Cardiac septum (tissue), 1 donor: ENCODE measurements at regions of chr2 and their contacts with region 1.

Region 1: DNA sequence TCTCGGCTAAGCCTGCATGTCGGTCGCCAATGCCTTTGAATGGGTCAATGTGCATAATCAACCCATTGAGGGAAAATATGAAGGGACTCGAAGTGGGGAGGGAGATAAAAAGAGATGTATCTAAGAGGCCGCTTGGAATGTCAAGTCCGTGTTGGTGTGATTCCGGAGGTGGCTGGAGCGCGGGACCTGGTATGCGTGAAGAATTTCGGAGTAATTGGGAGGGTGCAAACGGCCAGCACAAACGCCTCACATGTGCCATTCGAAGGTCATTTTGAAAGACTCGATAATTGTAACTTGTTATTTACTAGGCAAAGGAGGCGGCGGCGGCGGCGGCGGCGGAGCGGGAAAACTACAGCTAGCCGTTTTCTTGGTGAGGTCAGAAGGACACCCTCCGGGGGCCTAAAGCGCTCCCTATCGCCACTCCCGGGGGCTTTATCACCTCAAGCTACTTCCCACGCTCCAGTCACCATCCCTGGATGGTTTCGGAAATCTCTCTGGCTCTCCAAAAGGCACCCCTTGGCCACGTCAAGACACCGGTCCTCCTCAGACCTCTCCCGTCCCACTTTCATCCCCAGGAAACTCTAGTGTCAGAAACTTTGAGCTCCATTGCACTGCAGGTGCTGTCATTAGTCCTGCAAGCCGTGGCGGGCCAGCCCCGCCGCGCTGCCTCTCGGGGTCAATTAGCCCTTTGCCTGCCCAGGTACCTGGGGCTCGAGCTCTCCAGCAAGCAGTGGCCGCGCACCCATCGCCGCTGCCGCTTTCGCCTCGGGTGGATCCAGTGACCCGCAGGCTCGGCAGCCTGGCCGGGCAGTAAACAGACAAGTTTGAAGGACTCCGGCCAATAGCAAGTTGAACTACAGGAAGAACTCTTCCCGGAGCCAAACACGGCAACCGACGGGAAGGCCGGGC is 1.5 kb downstream of the ERBB4 start:
- DNase-seq: no peak

Region 2: DNA sequence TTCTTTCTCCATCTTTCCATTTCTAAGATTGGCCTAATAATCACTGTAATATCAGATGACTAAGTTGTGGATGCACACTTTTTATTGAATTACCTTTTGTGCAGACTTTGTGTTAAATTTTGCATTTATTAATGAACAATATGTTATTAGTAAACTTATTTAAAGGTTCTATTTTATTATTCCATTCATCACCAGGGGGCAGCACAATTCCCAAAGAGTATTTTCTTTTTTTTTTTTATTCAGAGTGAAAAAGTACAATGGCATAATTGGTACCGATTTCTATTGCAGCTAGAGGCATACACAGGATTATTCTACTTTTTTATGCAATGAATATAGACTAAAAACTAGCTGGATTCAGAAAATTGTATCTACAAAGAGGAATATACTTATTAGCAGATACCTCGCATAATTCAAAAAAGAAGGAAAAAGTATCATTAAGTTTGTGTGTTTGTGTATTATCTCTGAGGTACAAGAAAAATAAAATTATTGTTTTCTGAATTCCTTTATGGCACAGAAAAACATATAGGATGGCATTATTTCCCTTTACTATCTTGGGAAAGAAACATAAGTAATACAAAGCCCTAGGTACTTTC is 389.1 kb before region 1 on chr2:
- intact Hi-C with region 1: loop called (anchors 5 kb)
- DNase-seq: no peak

Region 3: DNA sequence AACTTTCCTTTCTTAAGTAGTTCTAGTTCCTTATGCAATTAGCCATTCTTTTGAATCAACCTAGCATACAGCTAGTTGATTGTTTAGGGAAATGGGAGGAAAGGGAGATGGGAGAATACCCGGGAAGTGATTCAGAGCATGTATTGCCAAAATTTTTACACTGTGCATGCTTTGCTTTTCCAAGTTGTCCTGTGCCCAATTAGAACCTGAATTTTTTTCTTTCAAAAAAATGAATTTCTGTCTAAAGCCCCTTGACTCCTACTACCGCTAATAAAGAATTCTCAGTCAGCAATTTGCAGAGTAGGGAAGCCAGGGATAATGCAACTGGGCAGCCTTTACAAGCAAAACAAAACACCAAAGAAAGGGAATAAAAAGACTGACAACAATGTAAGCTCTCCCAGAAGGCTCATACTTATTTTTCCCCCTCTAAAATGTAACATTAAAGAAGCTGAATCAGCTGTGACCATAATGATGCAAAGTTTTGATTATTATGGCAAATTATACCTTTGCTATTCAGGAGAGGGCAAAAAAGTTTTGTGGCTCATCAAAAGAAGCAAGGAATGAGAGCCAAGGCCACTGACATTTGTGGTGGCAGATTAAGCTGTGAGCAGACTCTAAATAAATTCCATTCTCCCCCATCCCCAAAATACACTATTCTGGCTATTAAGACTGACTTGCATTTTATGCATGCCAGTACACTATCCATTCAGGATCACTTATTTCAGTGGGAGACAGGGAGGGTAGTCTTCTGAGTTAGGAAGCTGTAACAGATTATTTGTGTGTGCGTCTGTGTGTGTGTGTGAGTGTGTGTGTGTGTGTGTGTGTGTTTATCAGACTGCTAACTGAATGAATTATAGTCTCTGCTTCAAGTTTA is 172.7 kb before region 1 on chr2:
- intact Hi-C with region 1: loop called (anchors 10 kb)
- DNase-seq: no peak